ENCODE measurements at regions of chr1 and their contacts with region 1.

Region 1: DNA sequence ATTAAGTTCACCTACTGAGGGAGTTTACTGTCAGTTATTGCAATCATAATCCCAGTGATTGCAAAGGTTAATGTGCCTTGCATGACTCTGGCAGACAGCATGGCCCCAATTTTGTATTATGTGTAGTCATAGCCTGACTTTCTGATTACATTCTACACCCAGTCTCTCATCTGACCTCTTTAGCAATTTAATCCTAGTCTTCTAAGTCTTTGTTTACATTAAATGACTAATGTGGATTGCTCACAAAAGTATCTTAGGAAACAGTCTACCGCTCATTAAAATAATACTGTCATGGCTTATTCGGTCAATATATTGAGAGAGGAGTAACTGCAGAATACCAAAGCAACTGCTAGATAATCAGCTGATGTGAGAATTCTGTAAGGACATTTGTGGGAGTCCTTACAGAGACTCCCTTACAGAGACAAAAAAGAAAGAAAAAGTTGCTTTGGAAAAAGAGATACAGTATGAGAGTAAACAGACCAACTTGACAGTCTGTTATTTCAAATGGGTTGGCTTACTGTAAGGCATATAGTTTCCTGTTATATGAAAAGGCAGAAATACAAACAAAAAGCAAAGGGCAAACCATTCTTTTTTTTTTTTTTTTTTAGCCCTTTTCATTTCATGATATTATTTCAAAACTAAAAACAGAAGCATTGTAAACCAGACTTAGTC is 42.9 kb downstream of the SMG7 start:
- H3K4me3 Mint-ChIP-seq: no peak overlapping the region
- H3K27ac Mint-ChIP-seq: no peak overlapping the region
- H3K4me1 Mint-ChIP-seq: peaks cover 14% of the 10 kb centered on the region
- H3K27me3 Mint-ChIP-seq: no peaks in the 10 kb centered on the region

Region 2: GRCh38 chr1:183461350-183461749 is 53.8 kb before region 1 on chr1:
- intact Hi-C with region 1: no loop called
- H3K4me3 Mint-ChIP-seq: no peak overlapping the region
- H3K27ac Mint-ChIP-seq: peak overlapping the region; percentile 78
- H3K4me1 Mint-ChIP-seq: peaks cover 25% of the 10 kb centered on the region
- H3K27me3 Mint-ChIP-seq: peaks cover under 1% of the 10 kb centered on the region

Region 3: DNA sequence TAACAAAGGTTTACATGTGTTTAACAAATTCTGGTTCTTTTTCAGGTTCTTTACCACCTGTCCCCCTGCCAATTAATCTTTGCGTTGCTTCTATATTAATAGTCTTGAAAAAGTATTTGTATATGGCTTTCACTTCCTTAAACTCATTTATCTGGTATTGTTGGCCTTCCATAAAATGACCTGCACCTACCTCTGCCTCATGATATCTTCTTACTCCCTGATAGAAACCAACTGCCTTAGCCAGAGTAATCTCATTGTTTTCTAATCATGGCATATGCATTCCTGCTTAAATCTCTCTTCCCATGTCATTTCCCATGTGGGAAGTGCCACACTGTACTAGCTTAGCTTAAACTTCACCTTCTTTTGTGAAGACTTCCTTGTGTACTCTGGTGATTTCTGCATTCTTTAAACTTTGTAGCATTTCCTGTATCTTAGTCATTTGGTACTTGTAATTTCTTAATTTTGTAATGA is 34.1 kb before region 1 on chr1:
- intact Hi-C with region 1: loop called (anchors 5 kb)
- H3K4me3 Mint-ChIP-seq: no peak overlapping the region
- H3K27ac Mint-ChIP-seq: peak overlapping the region; percentile 28
- H3K4me1 Mint-ChIP-seq: peaks cover 57% of the 10 kb centered on the region
- H3K27me3 Mint-ChIP-seq: no peaks in the 10 kb centered on the region

Region 4: GRCh38 chr1:183498342-183498991 is 16.7 kb before region 1 on chr1:
- intact Hi-C with region 1: no loop called
- H3K4me3 Mint-ChIP-seq: no peak overlapping the region
- H3K27ac Mint-ChIP-seq: no peak overlapping the region
- H3K4me1 Mint-ChIP-seq: peaks cover 28% of the 10 kb centered on the region
- H3K27me3 Mint-ChIP-seq: no peaks in the 10 kb centered on the region